ENCODE measurements at regions of chr9 and their contacts with region 1.

Region 1: GRCh38 chr9:91036826-91037510 is 235.3 kb downstream of the SYK start:
- DNase-seq: peak; percentile 61 to 79 (median 76)
- ATAC-seq: peak; percentile 83 to 96 (median 94)
- H3K4me3 ChIP-seq: no peak overlapping the region
- H3K27ac ChIP-seq: peak overlapping the region in 1 of 4 donors; percentile 79
- H3K4me1 ChIP-seq: peaks cover 7 to 14% (median 9%) of the 10 kb centered on the region in 3 donors
- H3K27me3 ChIP-seq: no peaks in the 10 kb centered on the region
- CTCF ChIP-seq: peak in 3 of 4 donors; percentile 23 to 48 (median 34)

Region 2: GRCh38 chr9:89576404-89576839 is 1460.5 kb before region 1 on chr9:
- intact Hi-C with region 1: loop called in 1 of 3 experiments (anchors 10 kb)
- DNase-seq: peak in 1 of 6 donors; percentile 10
- ATAC-seq: peak in 2 of 4 donors; percentile 32 to 40
- H3K4me3 ChIP-seq: no peak overlapping the region
- H3K27ac ChIP-seq: no peak overlapping the region
- H3K4me1 ChIP-seq: no peaks in the 10 kb centered on the region
- H3K27me3 ChIP-seq: no peaks in the 10 kb centered on the region
- CTCF ChIP-seq: peak; percentile 58 to 82 (median 70)

Region 3: GRCh38 chr9:90808890-90809685 is 227.9 kb before region 1 on chr9:
- intact Hi-C with region 1: no loop called
- DNase-seq: peak in 1 of 6 donors; percentile 46
- ATAC-seq: peak in 2 of 4 donors; percentile 45 to 74
- H3K4me3 ChIP-seq: no peak overlapping the region
- H3K27ac ChIP-seq: peak overlapping the region in 1 of 4 donors; percentile 8
- H3K4me1 ChIP-seq: peaks cover 0 to 23% (median 0%) of the 10 kb centered on the region in 3 donors
- H3K27me3 ChIP-seq: no peaks in the 10 kb centered on the region
- CTCF ChIP-seq: no peak

Region 4: GRCh38 chr9:91150998-91151717 is 114.2 kb after region 1 on chr9:
- intact Hi-C with region 1: loop called in 1 of 3 experiments (anchors 10 kb)
- DNase-seq: no peak
- ATAC-seq: peak in 3 of 4 donors; percentile 15 to 67 (median 39)
- H3K4me3 ChIP-seq: no peak overlapping the region
- H3K27ac ChIP-seq: peak overlapping the region in 1 of 4 donors; percentile 15
- H3K4me1 ChIP-seq: no peaks in the 10 kb centered on the region
- H3K27me3 ChIP-seq: no peaks in the 10 kb centered on the region
- CTCF ChIP-seq: no peak

Region 5: GRCh38 chr9:91207729-91208418 is 170.9 kb after region 1 on chr9:
- intact Hi-C with region 1: no loop called
- DNase-seq: peak in 1 of 6 donors; percentile 13
- ATAC-seq: peak; percentile 55 to 79 (median 76)
- H3K4me3 ChIP-seq: no peak overlapping the region
- H3K27ac ChIP-seq: peak overlapping the region; percentile 41 to 93 (median 82)
- H3K4me1 ChIP-seq: peaks cover 32 to 49% (median 45%) of the 10 kb centered on the region in 3 donors
- H3K27me3 ChIP-seq: no peaks in the 10 kb centered on the region
- CTCF ChIP-seq: no peak